Astrocyte of the cerebellum (primary cell): ENCODE measurements at regions of chr4 and their contacts with region 1.

Region 1: DNA sequence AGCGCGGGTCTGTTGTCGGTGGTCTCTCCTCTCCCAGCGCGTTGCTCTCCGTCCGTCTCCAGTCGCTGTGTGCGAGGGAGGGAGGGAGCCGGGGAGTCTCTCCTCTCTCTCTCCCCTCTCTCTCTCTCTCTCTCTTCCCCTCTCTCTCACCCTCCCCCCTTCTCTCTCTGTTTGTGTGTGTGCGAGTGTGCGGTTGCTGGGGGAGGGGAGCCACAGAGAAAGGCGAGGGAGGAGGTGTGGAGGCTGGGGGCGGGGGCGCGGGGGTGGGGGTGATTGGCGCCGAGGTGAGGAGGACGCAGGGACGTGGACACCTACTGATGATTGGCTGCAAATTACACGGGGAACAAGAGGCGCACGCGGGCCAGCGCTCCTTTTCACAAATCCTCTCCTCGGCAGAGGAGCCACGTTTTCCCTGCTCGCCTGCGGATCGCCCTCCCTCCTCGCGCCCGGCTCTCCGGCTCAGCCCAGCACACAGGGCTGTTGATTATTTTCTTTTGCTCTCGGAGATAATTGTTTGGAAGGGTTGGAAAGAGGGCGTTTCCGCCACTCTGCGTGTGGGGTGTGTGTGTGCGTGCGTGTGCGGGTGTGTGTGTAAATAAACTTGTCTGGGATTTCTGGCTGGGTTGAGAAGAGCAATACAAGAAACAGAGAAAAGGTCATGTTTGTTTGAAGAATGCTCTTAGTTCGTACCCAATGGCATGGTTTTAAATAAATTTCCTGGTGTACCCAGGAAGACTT is at the start of gene CXXC4:
- DNase-seq: peak; percentile 46
- H3K4me3 ChIP-seq: peak within 1 kb of the TSS; percentile 64
- CTCF ChIP-seq: no peak

Region 2: DNA sequence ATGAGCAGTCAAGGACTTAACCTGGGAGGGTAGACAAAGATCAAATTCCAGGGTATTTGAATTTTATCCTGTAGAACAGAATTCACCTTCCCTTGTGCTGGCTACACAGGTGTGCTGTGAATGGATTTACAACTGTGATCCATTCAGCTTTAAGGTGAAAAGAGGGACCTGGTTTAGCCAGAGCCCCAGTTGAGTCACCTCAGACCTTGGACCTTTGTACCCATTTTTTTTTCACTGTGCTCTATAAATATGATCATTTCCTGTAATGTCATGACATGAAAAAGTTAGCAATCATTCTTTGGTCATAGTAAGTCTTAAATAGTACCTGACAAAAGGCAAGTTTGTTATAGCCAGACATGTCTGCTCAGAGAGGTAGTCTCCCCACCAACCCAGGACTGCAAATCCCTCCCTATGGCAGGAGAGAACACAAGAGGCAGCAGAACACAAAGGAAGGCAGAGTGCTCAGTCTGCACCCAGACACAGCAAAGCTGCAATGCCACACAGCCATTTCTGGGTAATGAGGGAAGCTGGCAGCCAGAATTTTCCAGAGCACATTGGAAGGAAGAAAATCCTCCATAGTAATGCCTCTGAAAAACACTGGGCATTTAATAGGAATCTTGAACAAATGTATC is 78.2 kb before region 1 on chr4:
- in situ Hi-C with region 1: loop called (anchors 5 kb)
- DNase-seq: no peak
- H3K4me3 ChIP-seq: no peak overlapping the region
- CTCF ChIP-seq: no peak